ENCODE measurements at regions of chr5 and their contacts with region 1.

Region 1: GRCh38 chr5:179166886-179167841 is 107.0 kb downstream of the ZNF354C start:
- DNase-seq: no peak
- H3K4me3 ChIP-seq: peak overlapping the region; percentile 20 to 44
- H3K27ac ChIP-seq: no peak overlapping the region
- H3K4me1 ChIP-seq: peaks cover 0 to 3% of the 10 kb centered on the region in 2 donors
- H3K27me3 ChIP-seq: no peaks in the 10 kb centered on the region
- CTCF ChIP-seq: peak; percentile 73 to 92 (median 77)

Region 2: GRCh38 chr5:179154991-179155955 is 11.9 kb before region 1 on chr5:
- intact Hi-C with region 1: no loop called
- DNase-seq: peak in 1 of 2 donors; percentile 34
- H3K4me3 ChIP-seq: no peak overlapping the region
- H3K27ac ChIP-seq: no peak overlapping the region
- H3K4me1 ChIP-seq: no peaks in the 10 kb centered on the region
- H3K27me3 ChIP-seq: no peaks in the 10 kb centered on the region
- CTCF ChIP-seq: no peak

Region 3: GRCh38 chr5:179404321-179405053 is 237.3 kb after region 1 on chr5:
- intact Hi-C with region 1: loop called (anchors 1 kb)
- DNase-seq: no peak
- H3K4me3 ChIP-seq: no peak overlapping the region
- H3K27ac ChIP-seq: no peak overlapping the region
- H3K4me1 ChIP-seq: no peaks in the 10 kb centered on the region
- H3K27me3 ChIP-seq: no peaks in the 10 kb centered on the region
- CTCF ChIP-seq: peak in 1 of 3 experiments; percentile 34

Region 4: GRCh38 chr5:179495906-179496455 is 328.8 kb after region 1 on chr5:
- intact Hi-C with region 1: loop called (anchors 1 kb)
- DNase-seq: no peak
- H3K4me3 ChIP-seq: no peak overlapping the region
- H3K27ac ChIP-seq: no peak overlapping the region
- H3K4me1 ChIP-seq: no peaks in the 10 kb centered on the region
- H3K27me3 ChIP-seq: no peaks in the 10 kb centered on the region
- CTCF ChIP-seq: no peak

Measured in ascending aorta (tissue), 2 donors.